Activated CD4-positive, alpha-beta memory T cell treated with anti-CD3 and anti-CD28 coated beads for 36 hours (primary cell): ENCODE measurements at regions of chr3 and their contacts with region 1.

Region 1: DNA sequence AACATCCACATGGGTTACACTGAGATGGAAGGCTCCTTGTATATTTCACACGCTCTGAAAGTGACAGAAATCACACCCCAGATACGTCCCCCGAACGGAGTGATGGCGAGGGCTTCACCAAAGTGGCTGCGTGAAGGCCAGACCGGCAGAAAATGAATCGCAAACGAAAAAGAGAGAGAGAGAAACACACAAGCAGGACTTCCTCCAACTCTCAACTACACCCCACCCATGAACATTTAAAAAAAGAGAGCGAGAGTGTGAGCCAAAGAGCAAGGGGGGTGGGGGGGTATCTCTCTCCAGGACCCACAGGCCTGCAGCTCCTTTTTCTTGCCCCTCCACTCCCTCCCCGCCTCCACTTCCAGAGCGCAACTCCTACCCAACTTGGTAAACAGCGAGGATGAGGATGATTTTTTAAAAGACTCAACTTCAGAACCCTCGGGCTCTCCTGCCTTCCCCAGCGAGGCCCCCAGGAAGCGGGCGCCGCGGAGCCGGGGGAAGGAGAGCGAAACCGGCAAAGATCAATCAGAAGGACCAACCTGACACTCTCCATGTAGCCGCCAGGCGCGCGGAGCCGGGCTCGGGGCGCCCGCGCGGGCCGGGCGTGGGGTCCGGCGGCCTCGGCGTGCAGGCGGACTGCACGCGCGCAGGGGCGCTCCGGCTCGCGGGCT is 519.1 kb downstream of the FOXP1 start:
- DNase-seq: peak; percentile 78
- H3K4me3 Mint-ChIP-seq: no peak overlapping the region
- H3K27ac Mint-ChIP-seq: no peak overlapping the region
- H3K4me1 Mint-ChIP-seq: peaks cover 63% of the 10 kb centered on the region
- H3K27me3 Mint-ChIP-seq: no peaks in the 10 kb centered on the region

Region 2: GRCh38 chr3:69084326-69085167 is 1979.9 kb before region 1 on chr3 and contains the start of gene ARL6IP5:
- CTCF ChIA-PET with region 1: no interaction called
- POLR2A ChIA-PET with region 1: no interaction called
- intact Hi-C with region 1: loop called (anchors 5 kb)
- DNase-seq: peak; percentile 96
- H3K4me3 Mint-ChIP-seq: peak within 1 kb of the TSS; percentile 97
- H3K27ac Mint-ChIP-seq: peak within 1 kb of the TSS; percentile 97
- H3K4me1 Mint-ChIP-seq: peaks cover 57% of the 10 kb centered on the region
- H3K27me3 Mint-ChIP-seq: no peaks in the 10 kb centered on the region
- total RNA-seq, gene ARL6IP5: 93.9 to 94.8 TPM

Region 3: DNA sequence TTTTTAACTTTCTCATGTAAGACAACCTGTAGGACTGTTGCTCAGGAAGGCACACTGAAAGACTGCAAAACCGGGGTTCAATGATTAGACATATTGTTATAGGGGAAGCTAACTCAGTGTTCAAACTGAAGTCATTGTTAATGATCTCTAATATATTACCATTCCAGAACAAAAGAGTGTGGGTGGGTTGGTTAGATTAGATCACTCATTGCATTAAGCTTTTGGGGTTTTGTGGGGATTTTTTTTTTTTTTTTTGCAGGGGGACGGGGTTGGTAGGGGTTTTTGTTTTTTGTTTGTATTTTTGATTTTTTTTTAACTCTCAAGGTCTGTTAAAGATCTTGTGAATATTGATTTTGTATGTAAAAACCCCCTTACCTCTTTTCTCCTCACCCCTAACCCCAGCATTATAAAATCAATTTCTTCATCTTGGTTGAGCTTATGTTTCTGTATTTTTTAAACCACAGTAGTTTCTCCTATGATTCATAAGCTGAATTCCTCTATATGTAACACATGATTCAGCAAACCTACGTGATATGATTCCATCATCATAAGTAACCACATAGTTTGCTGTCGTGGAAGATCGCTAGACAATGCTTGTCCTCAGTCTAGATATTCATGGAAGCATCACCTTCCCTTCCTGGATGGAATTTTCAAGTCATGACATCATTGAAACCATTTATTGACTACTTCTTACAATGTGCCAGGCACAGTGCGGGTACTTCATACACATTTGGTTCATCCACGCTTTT is 207.8 kb before region 1 on chr3:
- CTCF ChIA-PET with region 1: no interaction called
- POLR2A ChIA-PET with region 1: no interaction called
- intact Hi-C with region 1: loop called (anchors 1 kb)
- DNase-seq: no peak
- H3K4me3 Mint-ChIP-seq: no peak overlapping the region
- H3K27ac Mint-ChIP-seq: no peak overlapping the region
- H3K4me1 Mint-ChIP-seq: peaks cover 17% of the 10 kb centered on the region
- H3K27me3 Mint-ChIP-seq: peaks cover 15% of the 10 kb centered on the region

Region 4: DNA sequence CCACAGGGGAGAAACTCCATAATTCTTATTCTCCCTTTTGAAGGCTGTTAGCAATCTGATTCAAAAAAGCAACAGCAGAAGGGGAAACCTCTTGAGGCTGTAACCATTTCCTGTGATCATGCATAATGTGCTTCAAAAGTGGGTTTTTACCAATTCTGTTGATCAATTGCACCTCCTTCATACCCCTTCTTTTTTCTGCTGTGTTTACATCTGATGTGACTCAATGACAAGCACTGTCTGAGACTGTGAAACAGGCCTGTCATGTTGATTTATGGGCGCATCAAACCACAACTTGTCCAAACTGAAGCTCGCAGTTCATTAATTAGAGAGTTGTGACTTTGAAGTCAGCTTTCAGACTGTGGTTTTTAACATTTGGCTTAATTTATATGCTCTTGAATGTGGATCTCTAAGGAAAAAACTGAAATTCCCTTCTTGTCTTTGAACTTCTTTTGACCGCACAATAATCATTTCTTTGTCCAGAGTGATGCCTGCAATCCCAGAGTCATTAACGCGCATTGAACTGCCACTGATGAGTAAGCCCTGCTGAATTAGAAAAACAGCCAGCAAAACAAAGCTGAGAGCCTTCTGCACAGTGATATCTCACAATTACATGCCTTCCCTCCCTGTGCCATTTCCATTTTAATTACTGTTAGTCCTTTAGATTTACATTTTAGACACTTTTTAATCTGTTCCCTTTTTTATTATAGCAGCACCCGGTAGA is 13.7 kb before region 1 on chr3:
- CTCF ChIA-PET with region 1: interaction called, 6 read pairs
- POLR2A ChIA-PET with region 1: interaction called, 34 read pairs
- intact Hi-C with region 1: loop called (anchors 1 kb)
- DNase-seq: peak; percentile 61
- H3K4me3 Mint-ChIP-seq: peak overlapping the region; percentile 6
- H3K27ac Mint-ChIP-seq: peak overlapping the region; percentile 86
- H3K4me1 Mint-ChIP-seq: peaks cover 100% of the 10 kb centered on the region
- H3K27me3 Mint-ChIP-seq: no peaks in the 10 kb centered on the region

Region 5: DNA sequence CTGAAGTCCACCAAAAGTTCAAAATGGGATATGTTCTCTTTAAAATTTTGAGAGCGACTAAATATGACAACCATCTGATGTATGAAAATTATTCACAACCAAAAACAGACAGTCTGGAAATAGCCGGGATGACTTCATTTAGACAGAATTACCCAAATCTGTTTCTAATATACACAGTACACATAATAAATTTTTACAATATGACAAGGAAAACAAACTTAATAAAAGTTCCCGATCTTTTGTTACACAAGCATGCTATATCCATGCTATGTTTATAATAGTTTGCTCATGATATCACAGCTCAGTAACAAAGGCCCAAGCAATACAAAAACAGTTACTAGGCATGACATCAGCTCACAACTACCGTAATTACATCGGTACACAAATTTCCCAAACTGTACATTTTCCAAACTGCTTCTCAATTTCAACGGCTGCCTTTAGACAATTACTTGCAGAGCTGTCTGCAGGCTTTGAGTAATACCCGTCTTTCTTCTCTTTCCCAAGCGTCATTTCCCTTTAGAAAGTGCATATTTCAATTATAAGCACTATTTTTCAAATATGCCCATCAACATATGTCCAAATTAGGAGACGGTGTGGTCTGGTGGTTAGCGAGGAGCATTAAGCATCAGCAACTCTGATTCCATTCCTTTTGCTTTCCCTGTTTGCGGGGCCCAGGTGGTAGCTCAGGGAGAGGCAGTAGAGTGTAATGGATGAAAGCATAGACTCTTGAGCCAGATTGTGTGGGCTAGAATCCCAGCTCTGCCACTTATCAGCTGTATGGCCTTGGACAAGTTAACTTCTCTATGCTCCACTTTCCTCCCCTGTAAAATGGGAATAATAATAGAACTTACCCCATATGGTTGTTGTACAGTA is 37.9 kb after region 1 on chr3:
- CTCF ChIA-PET with region 1: interaction called, 4 read pairs
- POLR2A ChIA-PET with region 1: interaction called, 12 read pairs
- intact Hi-C with region 1: no loop called
- DNase-seq: no peak
- H3K4me3 Mint-ChIP-seq: peak overlapping the region; percentile 41
- H3K27ac Mint-ChIP-seq: peak overlapping the region; percentile 89
- H3K4me1 Mint-ChIP-seq: peaks cover 80% of the 10 kb centered on the region
- H3K27me3 Mint-ChIP-seq: no peaks in the 10 kb centered on the region

Region 6: GRCh38 chr3:71305231-71306206 is 241.1 kb after region 1 on chr3:
- CTCF ChIA-PET with region 1: interaction called, 4 read pairs
- POLR2A ChIA-PET with region 1: interaction called, 17 read pairs
- intact Hi-C with region 1: loop called (anchors 2 kb)
- DNase-seq: peak; percentile 22
- H3K4me3 Mint-ChIP-seq: peak overlapping the region; percentile 77
- H3K27ac Mint-ChIP-seq: peak overlapping the region; percentile 87
- H3K4me1 Mint-ChIP-seq: peaks cover 86% of the 10 kb centered on the region
- H3K27me3 Mint-ChIP-seq: no peaks in the 10 kb centered on the region

Region 7: DNA sequence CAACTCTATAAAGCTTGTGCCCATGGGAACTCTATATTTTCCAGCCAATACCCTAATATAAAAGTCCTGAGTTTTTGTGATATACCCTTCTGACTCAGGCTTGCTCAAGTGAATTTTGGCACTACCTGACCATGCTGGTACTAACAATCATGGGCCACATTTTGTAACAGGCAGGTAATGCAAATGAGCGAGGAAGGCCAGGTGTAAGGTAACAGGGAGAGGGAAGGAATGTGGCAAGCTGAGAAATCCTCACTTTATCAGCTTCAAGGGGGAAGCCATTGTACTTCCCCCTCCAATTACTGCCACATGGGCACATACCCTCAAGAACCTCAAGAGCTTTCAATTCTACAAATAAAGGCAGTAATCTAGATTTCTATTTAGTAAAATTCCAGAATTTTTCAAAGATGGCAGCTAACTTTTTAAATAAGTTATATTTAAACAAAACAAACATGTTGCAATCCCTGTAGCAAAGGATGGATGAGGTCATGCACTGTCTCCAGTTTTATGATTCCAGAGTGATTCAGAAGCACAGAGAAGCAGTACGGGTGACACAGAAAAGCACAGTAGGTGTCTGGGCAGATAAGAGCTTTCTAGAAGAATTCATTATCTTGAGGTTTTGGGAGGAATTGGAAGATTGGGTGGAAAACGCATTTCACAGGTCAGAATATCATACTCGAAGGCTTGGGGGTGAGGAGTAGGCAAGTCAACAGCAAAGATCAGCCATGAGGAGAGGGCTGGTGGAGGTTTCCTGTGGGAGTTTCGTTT is 431.5 kb after region 1 on chr3:
- CTCF ChIA-PET with region 1: no interaction called
- POLR2A ChIA-PET with region 1: no interaction called
- intact Hi-C with region 1: loop called (anchors 2 kb)
- DNase-seq: peak; percentile 62
- H3K4me3 Mint-ChIP-seq: peak overlapping the region; percentile 58
- H3K27ac Mint-ChIP-seq: peak overlapping the region; percentile 77
- H3K4me1 Mint-ChIP-seq: peaks cover 73% of the 10 kb centered on the region
- H3K27me3 Mint-ChIP-seq: no peaks in the 10 kb centered on the region

Region 8: GRCh38 chr3:72405943-72406566 is 1341.6 kb after region 1 on chr3:
- CTCF ChIA-PET with region 1: no interaction called
- POLR2A ChIA-PET with region 1: no interaction called
- intact Hi-C with region 1: no loop called
- DNase-seq: no peak
- H3K4me3 Mint-ChIP-seq: no peak overlapping the region
- H3K27ac Mint-ChIP-seq: no peak overlapping the region
- H3K4me1 Mint-ChIP-seq: peaks cover 81% of the 10 kb centered on the region
- H3K27me3 Mint-ChIP-seq: no peaks in the 10 kb centered on the region